Right ventricle myocardium inferior (tissue), 1 donor: ENCODE measurements at regions of chr6 and their contacts with region 1.

Region 1: DNA sequence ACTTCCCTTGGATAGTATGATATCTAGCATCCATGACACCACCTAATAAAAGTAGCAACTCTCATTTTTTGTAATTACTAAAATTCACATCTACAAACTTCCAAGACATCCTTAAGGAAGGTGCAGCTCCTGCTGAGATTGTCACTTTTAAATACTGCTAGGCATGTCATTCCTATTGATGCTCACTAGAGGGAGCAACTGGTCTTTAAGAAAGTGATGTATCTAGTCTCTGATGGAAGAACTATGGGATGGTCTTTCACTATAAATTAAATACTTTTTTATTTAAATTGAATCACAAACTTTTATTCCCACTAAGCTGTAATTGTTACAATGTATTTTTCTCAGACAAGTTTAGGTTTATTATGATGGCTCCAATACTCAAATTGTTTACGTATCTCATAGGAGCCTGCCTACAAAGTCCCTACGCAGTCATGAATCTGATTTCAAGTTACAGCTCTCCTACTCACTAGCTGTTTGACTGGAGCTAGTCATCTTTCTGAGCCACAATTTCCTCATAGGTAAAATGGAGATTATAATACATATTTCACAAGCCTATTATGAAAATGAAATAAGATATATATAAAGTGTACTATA is 8.1 kb upstream of the TSPYL1 start:
- DNase-seq: no peak
- ATAC-seq: no peak

Region 2: GRCh38 chr6:116253505-116254296 is 34.1 kb before region 1 on chr6 and contains the start of gene TSPYL4:
- intact Hi-C with region 1: no loop called
- DNase-seq: peak; percentile 97
- ATAC-seq: peak; percentile 98
- total RNA-seq, gene TSPYL4: 27.4 TPM

Region 3: DNA sequence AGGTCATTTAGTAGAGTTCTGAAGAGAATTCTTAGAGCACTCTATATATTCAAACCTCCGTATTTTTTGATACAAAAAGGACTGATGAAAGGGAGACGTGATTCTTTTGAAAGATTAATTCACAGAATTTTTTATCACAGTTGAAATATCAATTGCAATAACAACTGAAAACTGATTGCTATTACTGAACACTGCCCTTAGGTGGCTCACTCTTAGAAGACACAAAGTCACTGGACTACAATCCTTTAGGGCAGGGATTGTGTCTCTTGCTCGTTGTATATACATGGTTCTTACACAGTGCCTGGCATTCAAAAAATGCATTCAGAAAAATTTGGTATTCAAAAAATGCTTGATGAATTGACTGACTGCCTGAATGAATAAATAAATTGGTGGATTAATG is 156.3 kb after region 1 on chr6:
- intact Hi-C with region 1: loop called (anchors 5 kb)
- DNase-seq: no peak
- ATAC-seq: no peak